Colonic mucosa (tissue), 4 donors: ENCODE measurements at regions of chr2 and their contacts with region 1.

Region 1: GRCh38 chr2:80506563-80506962 is 202.0 kb upstream of the LRRTM1 start:
- DNase-seq: no peak
- H3K4me3 ChIP-seq: no peak overlapping the region
- H3K27ac ChIP-seq: no peak overlapping the region
- H3K4me1 ChIP-seq: no peaks in the 10 kb centered on the region
- H3K27me3 ChIP-seq: no peaks in the 10 kb centered on the region
- CTCF ChIP-seq: no peak

Region 2: GRCh38 chr2:80054336-80054675 is 452.3 kb before region 1 on chr2:
- intact Hi-C with region 1: no loop called
- DNase-seq: no peak
- H3K4me3 ChIP-seq: no peak overlapping the region
- H3K27ac ChIP-seq: no peak overlapping the region
- H3K4me1 ChIP-seq: no peaks in the 10 kb centered on the region
- H3K27me3 ChIP-seq: no peaks in the 10 kb centered on the region
- CTCF ChIP-seq: no peak

Region 3: DNA sequence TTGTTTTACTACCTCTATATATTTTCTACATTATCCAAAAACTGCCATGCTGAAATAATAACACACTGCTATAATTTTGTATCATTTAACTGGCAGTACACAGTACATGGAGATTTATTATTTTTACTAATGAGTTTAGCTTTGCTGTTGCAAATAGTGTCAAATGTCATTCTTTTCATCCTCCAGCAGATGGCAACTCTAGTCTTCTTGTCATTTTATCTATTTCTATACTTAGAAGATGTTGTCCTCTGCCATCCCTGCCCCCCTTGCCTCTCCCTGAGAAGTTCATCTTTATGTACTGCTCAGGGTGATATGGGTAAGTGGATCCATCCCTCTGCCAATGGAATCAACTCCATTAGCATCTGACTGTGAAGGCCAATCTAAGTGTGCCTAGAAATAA is 180.3 kb before region 1 on chr2:
- intact Hi-C with region 1: loop called (anchors 10 kb)
- DNase-seq: no peak
- H3K4me3 ChIP-seq: no peak overlapping the region
- H3K27ac ChIP-seq: no peak overlapping the region
- H3K4me1 ChIP-seq: no peaks in the 10 kb centered on the region
- H3K27me3 ChIP-seq: no peaks in the 10 kb centered on the region
- CTCF ChIP-seq: no peak